Activated B cell treated with CpG ODN at 0.5 μM for 24 hours (primary cell): ENCODE measurements at regions of chr1 and their contacts with region 1.

Region 1: DNA sequence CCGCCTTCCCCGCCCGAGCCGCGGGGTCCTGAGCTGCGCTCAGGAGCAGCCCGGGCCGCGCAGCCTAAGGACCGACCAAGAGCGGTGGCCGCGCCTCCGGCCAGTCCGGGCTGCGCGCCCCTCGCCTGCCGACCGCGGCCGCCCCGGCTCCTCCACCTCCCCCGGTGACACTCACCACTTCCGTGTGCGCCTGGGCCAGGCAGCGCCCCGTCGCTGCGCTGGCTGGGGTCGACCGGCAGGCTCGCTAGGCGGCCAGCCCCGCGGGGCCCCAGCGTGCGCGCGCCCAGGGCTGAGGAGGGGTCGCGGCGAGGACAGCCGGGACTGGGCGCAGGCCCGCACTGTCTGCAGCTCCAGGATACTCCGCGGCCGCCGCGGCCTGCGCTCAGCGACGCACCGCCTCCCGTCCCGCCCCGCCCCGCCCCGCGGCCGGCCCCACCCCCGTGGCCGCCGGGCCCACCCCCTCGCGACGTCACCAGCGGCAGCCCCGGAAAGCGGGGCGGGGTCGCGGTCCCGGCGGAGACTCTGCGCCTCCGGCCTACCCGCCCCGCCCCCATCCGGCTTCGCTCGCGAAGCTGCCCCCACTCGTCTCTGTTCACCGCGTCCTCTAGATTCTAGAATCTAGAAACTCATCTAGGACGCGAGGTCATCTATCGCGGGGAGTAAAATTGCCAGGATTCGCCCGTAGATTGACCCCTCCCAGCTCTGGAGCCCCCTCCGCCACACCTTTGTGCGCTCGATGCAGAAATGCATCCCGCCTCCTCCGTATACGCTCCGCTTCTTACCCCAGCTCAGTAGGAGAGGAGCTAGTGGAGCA is at the start of gene JAK1:
- DNase-seq: peak; percentile 84
- ATAC-seq: peak; percentile 85
- H3K4me3 Mint-ChIP-seq: peak within 1 kb of the TSS; percentile 93
- H3K27ac Mint-ChIP-seq: peak within 1 kb of the TSS; percentile 92
- H3K4me1 Mint-ChIP-seq: peaks cover 49% of the 10 kb centered on the region
- H3K27me3 Mint-ChIP-seq: no peaks in the 10 kb centered on the region
- CTCF ChIP-seq: no peak
- total RNA-seq, gene JAK1: 195 and 215 TPM in 2 replicates

Region 2: GRCh38 chr1:64898107-64898845 is 68.1 kb before region 1 on chr1:
- CTCF ChIA-PET with region 1: no interaction called
- POLR2A ChIA-PET with region 1: interaction called, 10 read pairs
- intact Hi-C with region 1: loop called (anchors 2 kb)
- DNase-seq: no peak
- ATAC-seq: peak; percentile 69
- H3K4me3 Mint-ChIP-seq: peak overlapping the region; percentile 42
- H3K27ac Mint-ChIP-seq: peak overlapping the region; percentile 48
- H3K4me1 Mint-ChIP-seq: peaks cover 97% of the 10 kb centered on the region
- H3K27me3 Mint-ChIP-seq: no peaks in the 10 kb centered on the region
- CTCF ChIP-seq: no peak

Region 3: GRCh38 chr1:64948905-64949833 is 17.2 kb before region 1 on chr1:
- CTCF ChIA-PET with region 1: interaction called, 5 read pairs
- POLR2A ChIA-PET with region 1: interaction called, 20 read pairs
- intact Hi-C with region 1: loop called (anchors 2 kb)
- DNase-seq: no peak
- ATAC-seq: peak; percentile 56
- H3K4me3 Mint-ChIP-seq: peak overlapping the region; percentile 54
- H3K27ac Mint-ChIP-seq: peak overlapping the region; percentile 90
- H3K4me1 Mint-ChIP-seq: peaks cover 86% of the 10 kb centered on the region
- H3K27me3 Mint-ChIP-seq: no peaks in the 10 kb centered on the region
- CTCF ChIP-seq: no peak

Region 4: DNA sequence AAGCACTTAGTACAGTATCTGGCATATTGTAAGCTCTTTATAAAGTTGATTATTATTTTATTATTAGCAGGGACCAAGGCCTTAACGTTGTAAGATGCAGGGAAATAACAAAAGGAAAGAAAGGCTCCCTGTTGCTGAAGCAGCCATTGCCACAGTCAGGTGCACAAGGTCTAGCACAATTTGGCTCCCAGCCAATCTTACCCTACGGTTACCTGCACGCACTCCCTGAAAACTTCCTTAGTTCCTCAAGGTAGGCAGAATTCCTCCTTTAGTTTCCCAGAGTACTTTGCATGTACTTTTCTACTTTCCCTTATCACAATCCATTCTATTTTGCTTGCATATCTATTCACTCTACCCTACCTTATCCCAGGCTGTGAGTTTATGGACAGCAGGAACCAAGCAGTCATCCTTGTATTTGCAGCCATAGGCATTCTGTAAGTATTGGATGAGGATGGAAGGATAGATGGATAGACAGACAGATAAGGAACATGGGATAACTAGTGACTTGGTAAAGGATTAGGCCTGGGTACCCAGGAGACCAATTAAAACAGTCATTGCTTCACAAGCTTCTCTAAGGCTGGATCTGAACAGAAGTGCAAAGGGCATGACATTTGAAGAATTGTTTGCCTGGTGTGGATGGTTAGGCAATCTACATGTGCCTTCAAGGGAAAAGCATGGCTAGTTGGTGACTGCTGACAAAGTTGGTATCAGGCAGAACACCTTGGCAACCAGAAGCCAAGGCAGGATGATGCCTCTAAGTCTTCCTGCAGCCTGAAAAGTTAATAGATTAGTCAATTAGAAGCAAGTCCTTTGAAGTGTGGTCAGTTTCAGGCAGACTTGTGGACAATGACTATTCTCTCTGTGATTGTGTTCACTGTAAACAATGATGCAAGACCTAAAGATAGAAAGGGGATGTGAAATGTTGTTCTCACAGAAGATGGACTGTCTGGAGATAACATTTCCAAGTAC is 20.8 kb after region 1 on chr1:
- CTCF ChIA-PET with region 1: no interaction called
- POLR2A ChIA-PET with region 1: no interaction called
- intact Hi-C with region 1: loop called (anchors 2 kb)
- DNase-seq: no peak
- ATAC-seq: peak; percentile 42
- H3K4me3 Mint-ChIP-seq: no peak overlapping the region
- H3K27ac Mint-ChIP-seq: no peak overlapping the region
- H3K4me1 Mint-ChIP-seq: peaks cover 15% of the 10 kb centered on the region
- H3K27me3 Mint-ChIP-seq: no peaks in the 10 kb centered on the region
- CTCF ChIP-seq: no peak

Region 5: DNA sequence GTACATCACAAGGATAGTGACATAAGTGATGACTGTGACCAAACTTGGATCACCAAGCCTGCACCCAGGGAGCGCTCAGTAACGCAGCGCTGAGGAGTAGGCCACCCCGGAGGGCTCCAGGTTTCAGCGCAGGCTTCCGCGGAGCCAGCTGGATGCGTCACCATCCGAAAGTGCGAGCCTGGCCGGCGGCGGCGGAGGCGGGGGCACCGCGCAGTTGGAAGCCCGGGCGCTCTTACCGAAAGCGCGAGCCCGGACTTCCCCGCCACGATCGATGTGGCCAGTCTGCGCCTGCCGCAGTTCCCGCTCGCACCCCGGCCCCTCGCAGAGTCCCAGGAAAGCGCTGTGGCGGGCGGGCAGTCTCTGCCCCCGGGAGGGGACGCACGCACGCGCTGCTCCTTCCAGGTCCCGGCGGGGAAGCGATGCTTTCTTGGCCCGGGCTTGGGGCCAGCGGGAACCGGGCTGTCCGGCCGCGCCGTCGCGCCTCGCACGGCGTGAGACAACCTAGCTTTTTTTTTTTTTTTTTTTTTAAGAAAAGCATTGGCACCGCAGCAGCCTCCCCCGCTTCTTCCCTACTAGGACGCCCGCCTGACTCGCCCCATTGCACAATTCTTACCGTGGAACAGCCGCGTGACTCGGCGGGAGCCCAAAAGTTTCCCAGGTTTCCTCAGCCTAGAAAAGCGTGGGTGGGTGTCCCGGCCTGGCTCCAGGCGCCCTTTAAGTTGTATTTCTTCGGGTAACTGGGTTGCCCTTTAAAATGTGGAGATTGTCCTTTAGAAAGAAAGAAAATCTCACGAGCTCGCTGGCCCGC is 36.3 kb after region 1 on chr1:
- CTCF ChIA-PET with region 1: no interaction called
- POLR2A ChIA-PET with region 1: interaction called, 31 read pairs
- intact Hi-C with region 1: loop called (anchors 1 kb)
- DNase-seq: peak; percentile 66
- ATAC-seq: peak; percentile 81
- H3K4me3 Mint-ChIP-seq: peak overlapping the region; percentile 83
- H3K27ac Mint-ChIP-seq: peak overlapping the region; percentile 19
- H3K4me1 Mint-ChIP-seq: peaks cover 31% of the 10 kb centered on the region
- H3K27me3 Mint-ChIP-seq: no peaks in the 10 kb centered on the region
- CTCF ChIP-seq: no peak

Region 6: DNA sequence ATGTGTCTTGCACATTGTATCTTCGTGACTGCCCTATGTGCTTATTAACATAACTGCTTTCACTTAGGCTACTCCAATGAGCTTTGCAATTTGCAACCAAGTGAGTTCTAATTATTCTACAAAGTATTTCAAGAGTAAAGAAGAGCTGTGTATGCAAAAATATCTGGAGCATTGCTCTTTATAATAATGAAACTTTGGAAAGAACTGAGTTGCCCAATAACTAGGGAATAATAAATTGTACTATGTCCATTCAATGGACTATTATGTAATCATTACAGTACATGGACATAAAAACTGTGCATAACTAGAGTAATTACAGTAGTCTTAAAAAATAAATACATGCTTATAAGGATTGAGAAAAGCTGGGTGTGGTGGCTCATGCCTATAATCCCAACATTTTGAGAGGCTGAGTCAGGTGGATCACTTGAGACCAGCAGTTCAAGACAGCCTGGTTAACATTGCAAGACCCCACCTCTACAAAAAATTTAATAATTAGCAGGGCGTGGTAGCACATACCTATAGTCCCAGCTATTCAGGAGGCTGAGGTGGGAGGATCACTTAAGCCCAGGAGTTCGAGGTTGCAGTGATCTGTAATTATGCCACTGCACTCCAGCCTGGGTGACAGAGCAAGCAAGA is 70.3 kb after region 1 on chr1:
- CTCF ChIA-PET with region 1: no interaction called
- POLR2A ChIA-PET with region 1: interaction called, 4 read pairs
- intact Hi-C with region 1: loop called (anchors 2 kb)
- DNase-seq: no peak
- ATAC-seq: no peak
- H3K4me3 Mint-ChIP-seq: no peak overlapping the region
- H3K27ac Mint-ChIP-seq: no peak overlapping the region
- H3K4me1 Mint-ChIP-seq: peaks cover 11% of the 10 kb centered on the region
- H3K27me3 Mint-ChIP-seq: no peaks in the 10 kb centered on the region
- CTCF ChIP-seq: no peak

Region 7: DNA sequence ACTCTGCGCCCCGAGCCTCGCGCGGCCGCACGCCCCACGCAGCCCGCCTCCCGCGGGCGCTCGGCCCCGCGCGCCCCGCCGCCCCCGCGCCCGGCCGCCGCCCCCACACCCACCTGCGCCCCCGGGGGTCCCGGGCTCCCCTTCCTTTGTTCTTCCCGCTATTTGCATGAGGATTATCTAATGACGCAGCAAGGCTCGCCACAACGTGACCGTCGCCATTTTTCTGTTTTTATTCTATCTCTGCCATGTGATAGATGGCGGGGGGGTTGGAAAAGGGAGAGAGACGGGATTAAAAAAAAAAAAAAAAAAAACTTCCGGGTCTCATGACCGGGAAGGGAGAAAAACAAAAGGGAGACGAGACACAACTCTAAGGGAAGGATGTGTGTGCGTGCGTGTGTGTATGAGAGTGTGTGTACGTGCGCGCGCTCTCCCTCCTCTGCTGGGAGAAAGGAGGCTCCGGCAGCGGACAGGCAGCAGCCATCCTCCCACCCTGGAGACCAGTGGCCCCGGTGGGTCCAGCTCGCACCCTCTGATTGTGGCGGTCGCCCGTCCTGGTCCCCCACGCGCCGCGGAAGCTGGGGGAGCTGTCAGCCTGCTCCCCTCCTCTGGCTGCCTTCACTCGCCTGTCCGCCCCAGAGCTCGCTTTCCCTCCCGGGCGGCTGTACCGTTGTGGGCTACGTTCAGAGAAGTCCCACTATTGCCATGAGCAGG is 101.3 kb after region 1 on chr1:
- CTCF ChIA-PET with region 1: no interaction called
- POLR2A ChIA-PET with region 1: interaction called, 12 read pairs
- intact Hi-C with region 1: loop called (anchors 1 kb)
- DNase-seq: peak; percentile 50
- ATAC-seq: peak; percentile 15
- H3K4me3 Mint-ChIP-seq: peak overlapping the region; percentile 97
- H3K27ac Mint-ChIP-seq: peak overlapping the region; percentile 99
- H3K4me1 Mint-ChIP-seq: peaks cover 48% of the 10 kb centered on the region
- H3K27me3 Mint-ChIP-seq: no peaks in the 10 kb centered on the region
- CTCF ChIP-seq: no peak